ENCODE measurements at regions of chr17 and their contacts with region 1.

Region 1: GRCh38 chr17:42928714-42929496 is 28.3 kb downstream of the G6PC1 start:
- DNase-seq: peak in 3 of 5 donors; percentile 26 to 54 (median 42)
- ATAC-seq: peak; percentile 75 to 94 (median 92)
- H3K4me3 ChIP-seq: peak overlapping the region in 1 of 12 donors; percentile 6
- H3K27ac ChIP-seq: peak overlapping the region in 9 of 12 donors; percentile 3 to 89 (median 57)
- H3K4me1 ChIP-seq: peaks cover 0 to 29% (median 9%) of the 10 kb centered on the region in 12 donors
- H3K27me3 ChIP-seq: no peaks in the 10 kb centered on the region
- CTCF ChIP-seq: peak; percentile 58 to 82 (median 64)
- POLR2A ChIP-seq: no peak

Region 2: GRCh38 chr17:42819944-42820535 is 108.9 kb before region 1 on chr17:
- intact Hi-C with region 1: no loop called
- DNase-seq: peak; percentile 28 to 67 (median 44)
- ATAC-seq: no peak
- H3K4me3 ChIP-seq: no peak overlapping the region
- H3K27ac ChIP-seq: no peak overlapping the region
- H3K4me1 ChIP-seq: peaks cover 6 to 28% (median 16%) of the 10 kb centered on the region in 12 donors
- H3K27me3 ChIP-seq: no peaks in the 10 kb centered on the region
- CTCF ChIP-seq: peak; percentile 39 to 70 (median 62)
- POLR2A ChIP-seq: no peak

Region 3: DNA sequence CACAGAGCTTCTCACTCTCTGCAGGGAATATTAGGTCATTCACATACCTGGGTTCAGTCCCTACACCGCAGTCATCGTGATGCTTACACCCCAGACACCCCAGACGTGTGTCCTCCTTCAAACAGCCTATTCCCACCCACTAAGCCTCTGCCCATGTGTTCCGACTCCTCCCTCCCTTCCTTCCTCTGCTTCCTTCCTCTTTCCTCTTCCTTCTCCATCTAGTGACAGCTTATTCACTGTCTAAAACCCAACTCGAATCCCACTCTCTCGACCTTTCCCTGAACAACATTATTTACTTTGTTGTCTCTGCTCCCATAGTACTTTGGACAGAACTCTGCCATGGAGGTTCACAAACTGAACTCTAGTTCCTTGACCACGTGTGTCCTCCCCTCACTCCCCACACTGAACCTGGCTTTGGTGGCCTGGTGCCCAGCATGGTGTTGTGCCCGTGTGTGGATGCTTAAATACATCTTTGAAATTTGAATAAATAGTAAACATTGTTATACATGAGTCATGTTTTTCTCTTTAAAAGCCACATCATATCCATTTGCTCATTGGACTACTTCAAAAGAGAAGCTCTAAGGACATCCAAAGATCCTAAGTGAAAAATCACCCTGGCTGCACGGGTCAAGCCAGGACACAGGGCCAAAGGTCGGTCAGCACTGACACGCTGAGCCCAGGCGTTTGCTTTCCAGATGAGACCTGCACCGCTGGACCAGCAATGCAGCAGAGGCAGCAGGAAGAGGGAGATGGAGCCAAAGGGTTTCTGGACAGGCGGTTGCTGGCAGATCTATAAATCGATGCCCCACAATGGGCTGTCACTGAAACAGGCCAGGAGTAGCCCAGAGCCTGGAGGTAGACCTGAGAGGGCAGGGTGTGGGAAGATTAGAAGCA is 42.4 kb before region 1 on chr17:
- intact Hi-C with region 1: loop called in 2 of 10 experiments (anchors 5 kb)
- DNase-seq: peak in 1 of 5 donors; percentile 36
- ATAC-seq: peak in 3 of 4 donors; percentile 46 to 73 (median 60)
- H3K4me3 ChIP-seq: no peak overlapping the region
- H3K27ac ChIP-seq: peak overlapping the region in 4 of 12 donors; percentile 5 to 53 (median 16)
- H3K4me1 ChIP-seq: peaks cover 0 to 37% (median 10%) of the 10 kb centered on the region in 12 donors
- H3K27me3 ChIP-seq: no peaks in the 10 kb centered on the region
- CTCF ChIP-seq: no peak
- POLR2A ChIP-seq: no peak